CD8-positive, alpha-beta T cell (primary cell): ENCODE measurements at regions of chr3 and their contacts with region 1.

Region 1: GRCh38 chr3:18401300-18401961 is 23.7 kb downstream of the SATB1 start:
- DNase-seq: no peak
- ATAC-seq: peak; percentile 36
- H3K4me3 ChIP-seq: no peak overlapping the region
- H3K4me3 Mint-ChIP-seq: peak overlapping the region; percentile 70
- H3K27ac ChIP-seq: peak overlapping the region; percentile 23 to 42
- H3K27ac Mint-ChIP-seq: peak overlapping the region; percentile 96
- H3K4me1 ChIP-seq: peaks cover 82% of the 10 kb centered on the region
- H3K4me1 Mint-ChIP-seq: peaks cover 94% of the 10 kb centered on the region
- H3K27me3 ChIP-seq: no peaks in the 10 kb centered on the region
- H3K27me3 Mint-ChIP-seq: no peaks in the 10 kb centered on the region
- CTCF ChIP-seq: no peak

Region 2: DNA sequence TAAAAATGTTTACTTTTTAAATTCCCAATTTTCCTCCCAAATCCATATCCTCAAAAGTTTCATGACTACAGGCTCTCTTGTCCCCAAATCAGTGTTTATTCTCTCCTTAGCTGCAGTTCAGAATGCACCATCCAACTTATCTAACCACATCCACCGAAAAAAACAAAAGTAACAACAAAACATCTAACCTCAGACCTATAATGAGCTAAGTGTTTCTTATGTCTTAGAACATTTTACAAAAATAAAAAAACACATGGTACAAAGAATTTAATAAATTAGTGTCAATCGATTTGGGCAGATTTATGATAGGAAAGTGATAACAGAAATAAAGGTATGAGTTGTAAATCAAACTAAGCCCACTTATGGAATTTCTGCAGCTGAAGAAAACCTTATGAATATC is 10.1 kb after region 1 on chr3:
- CTCF ChIA-PET with region 1: interaction called, 7 read pairs
- POLR2A ChIA-PET with region 1: interaction called, 4 read pairs
- intact Hi-C with region 1: loop called in 1 of 2 experiments (anchors 1 kb)
- DNase-seq: peak in 2 of 9 experiments; percentile 34 to 67
- ATAC-seq: peak; percentile 67
- H3K4me3 ChIP-seq: peak overlapping the region in 1 of 2 experiments; percentile 7
- H3K4me3 Mint-ChIP-seq: peak overlapping the region; percentile 72
- H3K27ac ChIP-seq: peak overlapping the region in 1 of 2 experiments; percentile 11
- H3K27ac Mint-ChIP-seq: peak overlapping the region; percentile 92
- H3K4me1 ChIP-seq: peaks cover 86% of the 10 kb centered on the region
- H3K4me1 Mint-ChIP-seq: peaks cover 89% of the 10 kb centered on the region
- H3K27me3 ChIP-seq: no peaks in the 10 kb centered on the region
- H3K27me3 Mint-ChIP-seq: no peaks in the 10 kb centered on the region
- CTCF ChIP-seq: no peak

Region 3: GRCh38 chr3:18419232-18419631 is 17.8 kb after region 1 on chr3:
- CTCF ChIA-PET with region 1: interaction called, 3 read pairs
- POLR2A ChIA-PET with region 1: interaction called, 14 read pairs
- intact Hi-C with region 1: loop called in 1 of 2 experiments (anchors 2 kb)
- DNase-seq: no peak
- ATAC-seq: no peak
- H3K4me3 ChIP-seq: peak overlapping the region in 1 of 2 experiments; percentile 7
- H3K4me3 Mint-ChIP-seq: peak overlapping the region; percentile 75
- H3K27ac ChIP-seq: peak overlapping the region; percentile 44 to 46
- H3K27ac Mint-ChIP-seq: peak overlapping the region; percentile 88
- H3K4me1 ChIP-seq: peaks cover 71% of the 10 kb centered on the region
- H3K4me1 Mint-ChIP-seq: peaks cover 87% of the 10 kb centered on the region
- H3K27me3 ChIP-seq: no peaks in the 10 kb centered on the region
- H3K27me3 Mint-ChIP-seq: no peaks in the 10 kb centered on the region
- CTCF ChIP-seq: no peak

Region 4: GRCh38 chr3:18424729-18425640 is 23.6 kb after region 1 on chr3 and contains the start of gene SATB1:
- CTCF ChIA-PET with region 1: no interaction called
- POLR2A ChIA-PET with region 1: interaction called, 14 read pairs
- intact Hi-C with region 1: loop called in 1 of 2 experiments (anchors 2 kb)
- DNase-seq: peak; percentile 46 to 83 (median 76)
- ATAC-seq: peak; percentile 42
- H3K4me3 ChIP-seq: peak within 1 kb of the TSS; percentile 82 to 84
- H3K4me3 Mint-ChIP-seq: peak within 1 kb of the TSS; percentile 91
- H3K27ac ChIP-seq: peak within 1 kb of the TSS; percentile 76 to 83
- H3K27ac Mint-ChIP-seq: peak within 1 kb of the TSS; percentile 95
- H3K4me1 ChIP-seq: peaks cover 55% of the 10 kb centered on the region
- H3K4me1 Mint-ChIP-seq: peaks cover 76% of the 10 kb centered on the region
- H3K27me3 ChIP-seq: no peaks in the 10 kb centered on the region
- H3K27me3 Mint-ChIP-seq: no peaks in the 10 kb centered on the region
- CTCF ChIP-seq: no peak
- total RNA-seq, gene SATB1: 333 to 346 TPM